ENCODE measurements at regions of chr2 and their contacts with region 1.

Region 1: GRCh38 chr2:68709421-68709911 is 25.1 kb upstream of the ARHGAP25 start:
- DNase-seq: peak; percentile 67
- ATAC-seq: peak; percentile 56
- H3K4me3 ChIP-seq: no peak overlapping the region
- H3K4me3 Mint-ChIP-seq: peak overlapping the region; percentile 30
- H3K27ac ChIP-seq: no peak overlapping the region
- H3K27ac Mint-ChIP-seq: peak overlapping the region; percentile 33
- H3K4me1 ChIP-seq: peaks cover 22% of the 10 kb centered on the region in 2 donors
- H3K4me1 Mint-ChIP-seq: peaks cover 36% of the 10 kb centered on the region
- H3K27me3 ChIP-seq: no peaks in the 10 kb centered on the region
- H3K27me3 Mint-ChIP-seq: no peaks in the 10 kb centered on the region
- CTCF ChIP-seq: peak; percentile 79

Region 2: DNA sequence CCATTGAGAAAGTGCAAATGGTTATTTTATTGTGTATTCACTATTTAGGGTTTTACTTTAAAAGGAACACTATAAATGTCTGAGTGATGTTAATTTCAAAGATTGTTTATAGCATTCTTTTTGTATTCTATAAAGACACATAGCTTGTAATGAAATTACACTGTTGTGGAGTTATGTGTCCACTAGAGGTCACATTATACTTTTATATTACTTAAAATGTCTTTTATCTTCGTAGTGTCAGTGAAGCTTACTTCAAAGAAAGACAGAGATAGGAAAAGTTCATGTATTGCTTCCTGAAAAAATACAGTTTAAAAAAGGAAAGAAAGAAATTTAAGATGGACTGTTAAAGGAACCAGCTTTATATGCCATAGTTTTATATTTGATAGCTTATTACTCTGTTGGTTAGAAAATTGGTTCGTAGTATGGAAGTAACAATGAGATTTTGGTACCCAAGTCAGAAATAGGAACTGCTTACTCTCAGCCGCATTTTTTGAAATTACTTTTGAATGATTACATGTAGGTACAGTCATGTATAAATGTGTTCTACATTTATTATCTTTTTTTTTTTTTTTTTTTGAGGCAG is 221.6 kb before region 1 on chr2:
- CTCF ChIA-PET with region 1: interaction called, 23 read pairs
- POLR2A ChIA-PET with region 1: no interaction called
- intact Hi-C with region 1: no loop called
- DNase-seq: peak; percentile 50
- ATAC-seq: no peak
- H3K4me3 ChIP-seq: no peak overlapping the region
- H3K4me3 Mint-ChIP-seq: no peak overlapping the region
- H3K27ac ChIP-seq: no peak overlapping the region
- H3K27ac Mint-ChIP-seq: no peak overlapping the region
- H3K4me1 ChIP-seq: peaks cover 0 to 2% of the 10 kb centered on the region in 2 donors
- H3K4me1 Mint-ChIP-seq: peaks cover 4% of the 10 kb centered on the region
- H3K27me3 ChIP-seq: no peaks in the 10 kb centered on the region
- H3K27me3 Mint-ChIP-seq: no peaks in the 10 kb centered on the region
- CTCF ChIP-seq: peak; percentile 76

Region 3: DNA sequence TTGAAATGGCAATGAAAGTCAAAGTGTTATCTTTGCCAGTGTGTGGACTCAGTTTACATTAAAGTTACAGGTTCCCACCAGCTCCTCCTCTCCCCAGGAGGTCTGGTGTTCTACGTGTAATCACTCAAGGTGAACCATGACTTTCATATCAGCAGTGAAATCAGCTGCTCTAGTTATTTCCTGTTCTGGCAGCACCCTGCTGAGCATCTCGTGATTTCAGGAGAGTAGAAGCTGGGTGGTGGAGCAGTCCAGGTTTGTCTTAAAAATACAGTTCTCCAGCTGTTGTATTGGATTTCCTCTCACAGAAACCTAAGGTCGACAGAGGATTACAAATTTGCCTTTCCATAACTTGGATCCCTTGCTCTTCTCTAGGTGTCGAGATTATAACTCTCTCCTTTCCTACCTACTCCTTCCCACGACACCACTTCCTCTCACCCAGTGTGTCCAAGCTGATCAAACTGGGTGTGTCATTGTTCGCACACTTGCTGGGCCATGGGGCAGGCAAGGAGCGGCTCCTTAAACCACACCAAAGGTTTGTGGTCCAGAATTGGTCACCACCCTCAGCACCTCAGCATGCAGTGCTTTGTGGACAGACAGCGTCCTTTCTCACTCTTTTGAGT is 12.1 kb after region 1 on chr2:
- CTCF ChIA-PET with region 1: interaction called, 68 read pairs
- POLR2A ChIA-PET with region 1: interaction called, 4 read pairs
- intact Hi-C with region 1: no loop called
- DNase-seq: peak; percentile 85
- ATAC-seq: peak; percentile 88
- H3K4me3 ChIP-seq: peak overlapping the region in 3 of 5 experiments; percentile 1 to 14 (median 3)
- H3K4me3 Mint-ChIP-seq: peak overlapping the region; percentile 82
- H3K27ac ChIP-seq: peak overlapping the region; percentile 66 to 81
- H3K27ac Mint-ChIP-seq: peak overlapping the region; percentile 89
- H3K4me1 ChIP-seq: peaks cover 41 to 56% of the 10 kb centered on the region in 2 donors
- H3K4me1 Mint-ChIP-seq: peaks cover 65% of the 10 kb centered on the region
- H3K27me3 ChIP-seq: no peaks in the 10 kb centered on the region
- H3K27me3 Mint-ChIP-seq: no peaks in the 10 kb centered on the region
- CTCF ChIP-seq: no peak

Region 4: GRCh38 chr2:68766376-68766845 is 56.9 kb after region 1 on chr2:
- CTCF ChIA-PET with region 1: interaction called, 14 read pairs
- POLR2A ChIA-PET with region 1: no interaction called
- intact Hi-C with region 1: no loop called
- DNase-seq: peak; percentile 74
- ATAC-seq: peak; percentile 44
- H3K4me3 ChIP-seq: peak overlapping the region in 3 of 5 experiments; percentile 9 to 48 (median 16)
- H3K4me3 Mint-ChIP-seq: peak overlapping the region; percentile 80
- H3K27ac ChIP-seq: peak overlapping the region; percentile 93 to 99
- H3K27ac Mint-ChIP-seq: peak overlapping the region; percentile 98
- H3K4me1 ChIP-seq: peaks cover 97 to 100% of the 10 kb centered on the region in 2 donors
- H3K4me1 Mint-ChIP-seq: peaks cover 94% of the 10 kb centered on the region
- H3K27me3 ChIP-seq: no peaks in the 10 kb centered on the region
- H3K27me3 Mint-ChIP-seq: no peaks in the 10 kb centered on the region
- CTCF ChIP-seq: no peak

Region 5: GRCh38 chr2:68828887-68829708 is 119.6 kb after region 1 on chr2:
- CTCF ChIA-PET with region 1: interaction called, 43 read pairs
- POLR2A ChIA-PET with region 1: no interaction called
- intact Hi-C with region 1: no loop called
- DNase-seq: peak; percentile 60
- ATAC-seq: peak; percentile 21
- H3K4me3 ChIP-seq: no peak overlapping the region
- H3K4me3 Mint-ChIP-seq: peak overlapping the region; percentile 60
- H3K27ac ChIP-seq: peak overlapping the region; percentile 14 to 44
- H3K27ac Mint-ChIP-seq: peak overlapping the region; percentile 83
- H3K4me1 ChIP-seq: peaks cover 44 to 46% of the 10 kb centered on the region in 2 donors
- H3K4me1 Mint-ChIP-seq: peaks cover 67% of the 10 kb centered on the region
- H3K27me3 ChIP-seq: no peaks in the 10 kb centered on the region
- H3K27me3 Mint-ChIP-seq: no peaks in the 10 kb centered on the region
- CTCF ChIP-seq: no peak

Region 6: DNA sequence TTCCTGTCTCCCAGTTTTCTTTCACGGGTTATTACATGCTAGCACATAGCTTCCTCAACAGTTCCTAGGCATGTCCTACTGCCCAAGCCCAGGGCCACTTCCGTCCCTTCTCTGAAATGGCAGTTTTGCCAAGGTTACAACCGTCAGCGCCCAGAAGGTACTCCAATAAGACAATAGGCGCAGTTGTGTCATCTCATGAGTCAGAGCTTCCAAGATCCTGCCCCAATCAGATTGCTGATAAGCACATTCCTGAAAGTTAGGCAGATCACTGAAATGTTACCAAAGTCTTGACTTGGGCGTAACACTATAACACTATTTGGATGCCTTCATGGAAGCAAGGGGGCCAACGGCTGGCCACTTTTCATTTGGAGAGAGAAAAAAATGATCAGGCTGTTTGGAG is 209.0 kb after region 1 on chr2:
- CTCF ChIA-PET with region 1: interaction called, 156 read pairs
- POLR2A ChIA-PET with region 1: no interaction called
- intact Hi-C with region 1: no loop called
- DNase-seq: no peak
- ATAC-seq: no peak
- H3K4me3 ChIP-seq: no peak overlapping the region
- H3K4me3 Mint-ChIP-seq: no peak overlapping the region
- H3K27ac ChIP-seq: no peak overlapping the region
- H3K27ac Mint-ChIP-seq: no peak overlapping the region
- H3K4me1 ChIP-seq: no peaks in the 10 kb centered on the region
- H3K4me1 Mint-ChIP-seq: no peaks in the 10 kb centered on the region
- H3K27me3 ChIP-seq: no peaks in the 10 kb centered on the region
- H3K27me3 Mint-ChIP-seq: no peaks in the 10 kb centered on the region
- CTCF ChIP-seq: no peak